ENCODE measurements at regions of chr22 and their contacts with region 1.

Region 1: DNA sequence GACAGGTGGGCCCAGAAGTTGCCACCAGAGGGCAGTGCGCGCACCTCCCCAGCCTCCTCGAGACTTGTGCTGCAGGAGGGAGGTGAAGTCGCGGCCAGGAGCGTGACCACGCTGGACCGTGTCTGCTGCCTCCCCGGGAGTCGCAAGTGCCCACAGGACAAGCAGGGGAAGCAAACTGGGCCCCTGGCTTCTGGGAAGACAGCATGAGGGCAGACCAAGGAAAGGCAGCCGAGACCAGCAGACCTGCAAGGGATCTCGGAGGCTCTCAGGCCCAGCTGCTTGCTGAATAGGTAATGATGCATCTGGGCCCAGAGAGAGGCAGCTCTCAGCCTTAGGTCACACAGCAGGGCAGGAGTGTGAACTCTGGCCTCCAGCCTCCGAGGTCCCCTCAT is 17.0 kb upstream of the IL2RB start:
- DNase-seq: peak; percentile 73 to 82 (median 78)
- H3K4me3 ChIP-seq: peak overlapping the region; percentile 15 to 18
- H3K4me3 Mint-ChIP-seq: peak overlapping the region; percentile 75 to 90 (median 86)
- H3K27ac ChIP-seq: peak overlapping the region; percentile 37
- H3K27ac Mint-ChIP-seq: peak overlapping the region; percentile 85 to 98 (median 93)
- H3K4me1 ChIP-seq: peaks cover 90% of the 10 kb centered on the region
- H3K4me1 Mint-ChIP-seq: peaks cover 63 to 95% (median 78%) of the 10 kb centered on the region in 4 donors
- H3K27me3 ChIP-seq: no peaks in the 10 kb centered on the region
- H3K27me3 Mint-ChIP-seq: no peaks in the 10 kb centered on the region

Region 2: GRCh38 chr22:36873680-36874537 is 292.8 kb before region 1 on chr22:
- CTCF ChIA-PET with region 1: no interaction called
- POLR2A ChIA-PET with region 1: no interaction called
- intact Hi-C with region 1: no loop called
- DNase-seq: peak in 2 of 5 donors; percentile 25 to 34
- H3K4me3 ChIP-seq: no peak overlapping the region
- H3K4me3 Mint-ChIP-seq: peak overlapping the region in 7 of 8 donors; percentile 23 to 54 (median 42)
- H3K27ac ChIP-seq: peak overlapping the region; percentile 27
- H3K27ac Mint-ChIP-seq: peak overlapping the region; percentile 81 to 91 (median 87)
- H3K4me1 ChIP-seq: peaks cover 19% of the 10 kb centered on the region
- H3K4me1 Mint-ChIP-seq: peaks cover 10 to 15% (median 13%) of the 10 kb centered on the region in 4 donors
- H3K27me3 ChIP-seq: no peaks in the 10 kb centered on the region
- H3K27me3 Mint-ChIP-seq: no peaks in the 10 kb centered on the region

Region 3: DNA sequence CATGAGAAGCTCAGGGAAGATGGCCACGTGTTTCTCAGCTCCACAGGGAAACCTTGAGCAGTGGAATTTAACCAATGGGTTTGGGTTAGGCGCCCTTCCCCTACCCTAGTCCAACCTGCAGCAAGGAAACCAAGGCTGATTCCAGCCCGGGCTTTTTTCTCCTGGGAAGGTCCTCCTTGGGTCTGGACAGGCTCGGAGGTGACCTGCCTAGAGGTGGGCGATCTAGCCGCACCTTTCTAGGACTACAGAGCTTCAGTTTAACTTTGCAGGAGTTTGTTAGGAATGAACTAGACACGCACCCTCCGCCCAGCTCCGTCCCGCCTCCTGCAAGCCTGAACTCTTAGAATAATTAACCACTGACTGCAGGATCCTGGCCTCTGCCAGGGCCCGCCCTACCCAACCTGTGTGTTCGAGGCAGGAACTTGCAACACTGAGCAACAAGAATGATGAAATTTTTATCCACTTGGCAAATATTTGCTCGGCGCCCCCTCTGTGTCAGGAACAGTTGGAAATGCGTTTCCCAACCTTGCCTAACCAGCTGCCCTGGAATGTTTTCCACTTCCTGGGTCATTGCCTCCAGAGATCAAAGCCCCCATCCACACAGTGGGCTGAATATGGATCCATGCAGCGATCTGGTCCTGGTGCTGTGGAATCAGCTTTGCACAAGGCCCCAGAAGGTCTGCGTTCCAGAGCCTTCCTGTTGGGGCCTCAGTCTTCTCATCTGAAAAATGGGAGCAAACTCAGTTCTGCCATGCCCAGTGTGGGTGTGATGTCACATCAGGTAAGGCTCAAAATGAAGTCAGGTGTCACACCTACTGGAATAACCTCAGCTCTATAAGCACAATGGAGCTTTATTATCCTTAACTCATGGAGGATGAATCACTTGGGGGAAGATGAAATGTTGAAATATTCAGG is 133.9 kb before region 1 on chr22:
- CTCF ChIA-PET with region 1: no interaction called
- POLR2A ChIA-PET with region 1: no interaction called
- intact Hi-C with region 1: no loop called
- DNase-seq: no peak
- H3K4me3 ChIP-seq: no peak overlapping the region
- H3K4me3 Mint-ChIP-seq: no peak overlapping the region
- H3K27ac ChIP-seq: no peak overlapping the region
- H3K27ac Mint-ChIP-seq: no peak overlapping the region
- H3K4me1 ChIP-seq: no peaks in the 10 kb centered on the region
- H3K4me1 Mint-ChIP-seq: no peaks in the 10 kb centered on the region
- H3K27me3 ChIP-seq: no peaks in the 10 kb centered on the region
- H3K27me3 Mint-ChIP-seq: peaks cover 3 to 12% of the 10 kb centered on the region in 2 donors

Region 4: DNA sequence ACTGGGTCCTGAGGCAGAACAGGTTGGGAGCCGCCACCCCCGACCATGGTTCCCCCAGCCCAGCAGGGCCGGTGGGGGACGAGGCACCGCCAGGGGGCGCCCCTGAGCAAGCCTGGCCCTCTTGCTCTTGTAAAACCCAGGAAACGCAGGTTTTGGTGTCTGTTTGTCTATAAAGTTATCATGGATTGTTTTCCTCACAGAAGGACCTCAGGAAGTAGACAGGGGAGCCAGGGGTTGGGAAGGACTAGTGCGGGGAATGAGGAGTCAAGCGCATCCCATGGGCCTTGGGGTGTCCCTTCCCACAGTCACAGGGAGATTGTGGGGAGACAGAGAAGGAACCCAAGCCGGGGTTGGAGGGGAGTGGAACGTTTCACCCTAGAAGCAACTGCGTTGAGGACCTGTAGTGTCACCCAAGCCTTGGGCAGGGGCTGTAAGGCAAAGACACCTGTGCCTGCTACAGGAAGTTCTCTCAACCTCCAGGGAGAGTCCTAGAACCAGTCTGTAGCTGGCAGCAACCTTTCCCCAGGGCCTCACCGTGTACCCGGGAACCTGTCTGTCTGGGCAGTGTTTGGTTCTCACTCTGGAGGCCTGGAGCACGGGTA is 88.7 kb before region 1 on chr22:
- CTCF ChIA-PET with region 1: interaction called, 13 read pairs
- POLR2A ChIA-PET with region 1: interaction called, 15 read pairs
- intact Hi-C with region 1: loop called (anchors 1 kb)
- DNase-seq: peak; percentile 76 to 85 (median 81)
- H3K4me3 ChIP-seq: no peak overlapping the region
- H3K4me3 Mint-ChIP-seq: peak overlapping the region in 7 of 8 donors; percentile 2 to 73 (median 58)
- H3K27ac ChIP-seq: peak overlapping the region; percentile 44
- H3K27ac Mint-ChIP-seq: peak overlapping the region; percentile 93 to 100 (median 99)
- H3K4me1 ChIP-seq: peaks cover 34% of the 10 kb centered on the region
- H3K4me1 Mint-ChIP-seq: peaks cover 26 to 52% (median 39%) of the 10 kb centered on the region in 4 donors
- H3K27me3 ChIP-seq: no peaks in the 10 kb centered on the region
- H3K27me3 Mint-ChIP-seq: peaks cover 4 to 5% of the 10 kb centered on the region in 2 donors

Region 5: DNA sequence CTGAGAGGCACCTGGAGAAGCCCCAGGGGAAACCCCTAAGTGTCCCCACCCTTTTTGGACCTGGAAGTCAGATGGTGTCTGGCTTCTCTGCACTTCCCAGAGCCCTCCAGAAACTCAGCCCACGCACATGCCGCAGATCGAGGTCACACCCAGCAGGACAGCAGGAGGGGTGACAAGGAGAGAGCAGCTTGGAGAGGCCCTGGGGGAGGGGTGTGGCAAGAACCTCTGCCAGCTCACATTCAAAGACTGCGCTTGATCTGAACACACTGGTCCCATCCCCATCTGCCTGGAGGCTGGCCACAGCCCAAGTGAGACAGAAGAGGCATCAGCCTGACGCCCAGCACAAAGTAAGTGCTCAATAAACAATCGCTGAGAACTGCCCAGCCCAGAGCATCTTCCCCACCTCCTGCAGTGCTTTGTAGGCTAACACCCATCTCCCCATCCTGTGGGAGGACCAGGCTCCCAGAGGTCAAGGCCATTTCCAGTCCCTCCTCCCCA is 78.5 kb before region 1 on chr22:
- CTCF ChIA-PET with region 1: no interaction called
- POLR2A ChIA-PET with region 1: no interaction called
- intact Hi-C with region 1: no loop called
- DNase-seq: no peak
- H3K4me3 ChIP-seq: no peak overlapping the region
- H3K4me3 Mint-ChIP-seq: no peak overlapping the region
- H3K27ac ChIP-seq: no peak overlapping the region
- H3K27ac Mint-ChIP-seq: peak overlapping the region in 1 of 7 donors; percentile 18
- H3K4me1 ChIP-seq: peaks cover 6% of the 10 kb centered on the region
- H3K4me1 Mint-ChIP-seq: peaks cover 1 to 16% (median 8%) of the 10 kb centered on the region in 4 donors
- H3K27me3 ChIP-seq: no peaks in the 10 kb centered on the region
- H3K27me3 Mint-ChIP-seq: no peaks in the 10 kb centered on the region

Region 6: GRCh38 chr22:37139762-37140161 is 26.9 kb before region 1 on chr22:
- CTCF ChIA-PET with region 1: interaction called, 134 read pairs
- POLR2A ChIA-PET with region 1: interaction called, 16 read pairs
- intact Hi-C with region 1: no loop called
- DNase-seq: no peak
- H3K4me3 ChIP-seq: no peak overlapping the region
- H3K4me3 Mint-ChIP-seq: no peak overlapping the region
- H3K27ac ChIP-seq: no peak overlapping the region
- H3K27ac Mint-ChIP-seq: peak overlapping the region in 3 of 7 donors; percentile 73 to 78 (median 73)
- H3K4me1 ChIP-seq: peaks cover 28% of the 10 kb centered on the region
- H3K4me1 Mint-ChIP-seq: peaks cover 7 to 39% (median 15%) of the 10 kb centered on the region in 4 donors
- H3K27me3 ChIP-seq: no peaks in the 10 kb centered on the region
- H3K27me3 Mint-ChIP-seq: no peaks in the 10 kb centered on the region

Region 7: GRCh38 chr22:37193629-37194191 is 27.0 kb after region 1 on chr22:
- CTCF ChIA-PET with region 1: interaction called, 108 read pairs
- POLR2A ChIA-PET with region 1: interaction called, 96 read pairs
- intact Hi-C with region 1: loop called (anchors 1 kb)
- DNase-seq: peak; percentile 41 to 63 (median 45)
- H3K4me3 ChIP-seq: no peak overlapping the region
- H3K4me3 Mint-ChIP-seq: peak overlapping the region; percentile 49 to 82 (median 60)
- H3K27ac ChIP-seq: peak overlapping the region; percentile 17
- H3K27ac Mint-ChIP-seq: peak overlapping the region; percentile 68 to 95 (median 90)
- H3K4me1 ChIP-seq: peaks cover 51% of the 10 kb centered on the region
- H3K4me1 Mint-ChIP-seq: peaks cover 18 to 55% (median 33%) of the 10 kb centered on the region in 4 donors
- H3K27me3 ChIP-seq: no peaks in the 10 kb centered on the region
- H3K27me3 Mint-ChIP-seq: no peaks in the 10 kb centered on the region

Region 8: DNA sequence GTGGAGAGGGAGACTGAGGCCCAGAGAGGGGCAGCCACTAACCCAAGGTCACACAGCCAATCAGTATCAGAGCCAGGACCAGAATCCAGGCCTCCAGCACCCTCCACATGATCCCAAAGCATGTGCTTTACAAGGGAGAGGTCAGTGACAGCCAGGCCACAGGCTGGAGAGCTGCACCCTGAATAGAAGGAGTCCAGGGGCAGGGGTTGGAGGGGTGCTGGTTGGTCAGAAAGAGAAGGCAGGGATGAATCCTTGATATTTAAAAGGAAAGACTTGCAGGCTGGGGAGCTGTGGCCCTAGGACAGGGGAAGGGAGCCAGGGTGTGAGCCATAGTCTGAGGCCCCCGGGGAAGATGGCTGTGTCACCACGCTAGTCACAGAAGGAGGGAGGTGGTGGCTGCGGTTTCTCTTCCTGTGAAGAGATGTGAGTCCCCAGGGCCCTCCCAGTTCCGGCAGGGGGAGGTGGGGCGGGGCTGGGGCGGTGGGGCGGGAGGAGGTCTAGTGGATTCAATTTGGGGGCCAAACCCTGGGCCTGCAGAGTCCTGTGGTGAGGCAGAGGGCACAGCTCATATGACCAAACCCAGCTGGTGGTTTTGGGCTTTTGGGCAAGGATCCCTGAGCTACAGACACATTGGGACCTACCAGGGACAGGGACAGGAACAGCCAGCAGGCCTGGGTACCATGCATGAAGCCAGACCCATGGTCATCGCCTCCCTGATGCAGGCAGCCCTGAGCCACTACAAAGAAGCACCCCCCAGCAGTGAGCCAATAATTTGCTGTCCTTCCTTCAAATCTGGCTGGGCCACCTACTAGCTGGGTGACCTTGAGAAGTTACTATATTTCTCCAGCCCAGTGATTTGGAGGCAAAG is 63.4 kb after region 1 on chr22:
- CTCF ChIA-PET with region 1: interaction called, 5 read pairs
- POLR2A ChIA-PET with region 1: interaction called, 12 read pairs
- intact Hi-C with region 1: no loop called
- DNase-seq: peak; percentile 87 to 97 (median 88)
- H3K4me3 ChIP-seq: peak overlapping the region; percentile 48 to 51
- H3K4me3 Mint-ChIP-seq: peak overlapping the region; percentile 75 to 88 (median 82)
- H3K27ac ChIP-seq: peak overlapping the region; percentile 97
- H3K27ac Mint-ChIP-seq: peak overlapping the region; percentile 87 to 100 (median 100)
- H3K4me1 ChIP-seq: peaks cover 96% of the 10 kb centered on the region
- H3K4me1 Mint-ChIP-seq: peaks cover 67 to 92% (median 83%) of the 10 kb centered on the region in 4 donors
- H3K27me3 ChIP-seq: no peaks in the 10 kb centered on the region
- H3K27me3 Mint-ChIP-seq: no peaks in the 10 kb centered on the region

Region 9: DNA sequence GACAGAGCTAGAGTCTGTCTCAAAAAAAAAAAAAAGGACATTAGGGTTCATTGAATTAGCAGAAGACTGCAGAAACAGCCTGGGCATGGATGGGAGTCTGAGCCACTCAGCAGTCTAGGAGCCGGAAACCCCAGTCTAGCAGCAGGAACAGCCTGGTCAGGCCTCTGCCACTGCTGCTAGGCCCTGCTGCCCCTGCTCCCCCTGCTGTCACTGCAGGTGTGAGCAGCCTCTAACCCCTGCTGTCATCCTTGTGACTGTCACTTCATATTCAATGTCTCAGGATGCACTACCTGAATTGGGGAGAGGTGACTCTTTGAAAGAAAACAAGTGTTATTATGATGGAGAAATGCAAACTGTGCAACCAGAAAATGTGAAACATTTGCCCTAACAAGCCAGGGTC is 1346.4 kb after region 1 on chr22:
- CTCF ChIA-PET with region 1: no interaction called
- POLR2A ChIA-PET with region 1: no interaction called
- intact Hi-C with region 1: no loop called
- DNase-seq: peak in 3 of 5 donors; percentile 23 to 44 (median 38)
- H3K4me3 ChIP-seq: no peak overlapping the region
- H3K4me3 Mint-ChIP-seq: no peak overlapping the region
- H3K27ac ChIP-seq: no peak overlapping the region
- H3K27ac Mint-ChIP-seq: peak overlapping the region in 2 of 7 donors; percentile 18 to 64
- H3K4me1 ChIP-seq: no peaks in the 10 kb centered on the region
- H3K4me1 Mint-ChIP-seq: peaks cover 3 to 8% (median 5%) of the 10 kb centered on the region in 4 donors
- H3K27me3 ChIP-seq: no peaks in the 10 kb centered on the region
- H3K27me3 Mint-ChIP-seq: no peaks in the 10 kb centered on the region

Measured in CD4-positive, alpha-beta memory T cell (primary cell).